ENCODE measurements at regions of chr2 and their contacts with region 1.

Region 1: DNA sequence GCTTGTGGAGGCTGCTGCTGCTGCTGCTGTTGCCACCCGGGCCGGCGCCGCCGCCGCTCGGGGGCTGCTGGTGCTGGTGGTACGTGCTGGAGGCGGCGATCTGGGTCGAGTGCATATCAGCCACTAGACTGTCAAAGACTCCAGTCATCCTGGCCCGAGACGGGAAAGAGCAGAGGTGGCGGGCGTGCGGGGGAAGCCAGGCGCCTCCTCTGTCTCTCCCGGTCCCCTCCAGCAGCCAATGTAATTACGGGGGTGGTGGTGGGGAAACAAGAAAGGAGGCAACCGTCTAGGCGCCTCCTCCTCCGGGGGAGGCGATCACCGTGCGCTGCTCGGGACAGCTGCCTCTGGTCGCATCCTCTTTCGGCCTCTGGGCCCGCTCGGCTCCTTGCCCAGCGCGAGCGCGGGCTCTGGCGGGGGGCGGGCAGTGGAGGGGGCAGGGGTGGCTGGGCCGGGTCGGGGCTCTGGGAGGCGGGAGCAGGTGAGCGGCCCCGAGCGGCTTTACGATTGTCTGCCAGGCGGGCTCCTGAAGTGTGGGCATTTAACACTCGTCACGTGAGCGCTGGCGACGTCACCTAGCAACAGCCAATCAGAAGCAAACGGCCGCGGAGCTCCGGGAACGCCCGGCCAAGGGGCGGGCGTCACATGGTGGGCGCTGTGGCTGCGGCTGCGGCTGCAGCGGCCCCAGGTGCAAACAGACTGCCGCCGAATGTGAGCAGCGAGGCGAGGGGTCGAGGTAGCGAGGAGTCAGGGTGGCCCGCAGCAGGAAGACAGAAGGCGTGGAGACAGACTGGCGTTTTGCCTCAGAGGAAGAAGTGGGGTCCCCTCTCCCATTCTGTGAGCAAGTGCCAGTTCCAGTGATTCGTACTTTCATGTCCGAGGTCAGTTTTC is at the start of gene DLX2:
- DNase-seq: peak; percentile 74
- H3K4me3 Mint-ChIP-seq: peak within 1 kb of the TSS; percentile 76
- H3K27ac Mint-ChIP-seq: peak within 1 kb of the TSS; percentile 24
- H3K4me1 Mint-ChIP-seq: peaks cover 50% of the 10 kb centered on the region
- H3K27me3 Mint-ChIP-seq: peaks cover 71% of the 10 kb centered on the region
- total RNA-seq, gene DLX2: not detected

Region 2: DNA sequence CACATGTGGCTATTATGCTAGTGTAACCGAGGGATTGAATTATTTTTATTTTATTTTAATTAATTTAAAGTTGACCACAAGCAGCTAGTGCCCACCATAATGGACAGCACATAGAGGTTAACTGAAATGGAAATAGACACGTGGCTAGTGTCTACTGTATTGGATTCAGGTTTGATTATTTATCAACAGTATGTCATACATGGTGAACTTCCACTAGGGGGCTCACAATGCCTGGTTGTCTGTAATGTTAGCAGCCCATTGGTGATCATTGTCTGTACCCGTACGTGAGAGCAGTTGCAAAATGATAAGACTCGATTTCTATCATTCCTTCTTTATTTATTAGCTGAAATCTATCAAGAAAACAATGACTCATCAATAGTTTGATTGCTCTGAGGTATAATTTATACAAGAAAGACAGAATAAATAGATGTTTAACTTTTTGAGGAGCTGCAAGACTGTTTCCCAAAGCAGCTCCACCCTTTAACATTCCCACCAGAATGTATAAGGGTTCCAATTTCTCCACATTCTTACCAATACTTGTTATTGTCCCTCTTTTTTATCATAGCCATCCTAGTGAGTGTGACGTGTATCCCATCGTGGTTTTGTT is 503.8 kb before region 1 on chr2:
- CTCF ChIA-PET with region 1: interaction called, 7 read pairs
- intact Hi-C with region 1: loop called (anchors 1 kb)
- DNase-seq: peak; percentile 72
- H3K4me3 Mint-ChIP-seq: no peak overlapping the region
- H3K27ac Mint-ChIP-seq: no peak overlapping the region
- H3K4me1 Mint-ChIP-seq: no peaks in the 10 kb centered on the region
- H3K27me3 Mint-ChIP-seq: no peaks in the 10 kb centered on the region

Region 3: DNA sequence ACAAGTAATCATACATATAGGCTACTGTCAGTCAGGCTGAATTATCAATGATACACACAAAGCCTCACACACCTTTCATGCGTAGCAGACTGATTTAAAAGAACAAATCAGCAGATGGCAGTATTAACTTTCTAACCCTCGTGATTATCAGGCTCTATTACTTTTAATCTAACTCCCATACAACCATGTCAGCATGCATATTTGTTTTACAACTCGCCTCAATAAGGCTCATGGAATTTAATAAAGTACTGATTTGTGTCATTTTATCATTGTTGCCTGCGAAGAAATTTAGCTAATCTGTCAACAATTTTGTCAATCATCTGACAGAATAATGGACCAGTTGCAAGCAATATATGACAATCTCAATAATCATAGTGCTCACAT is 291.4 kb before region 1 on chr2:
- CTCF ChIA-PET with region 1: interaction called, 12 read pairs
- intact Hi-C with region 1: loop called (anchors 1 kb)
- DNase-seq: no peak
- H3K4me3 Mint-ChIP-seq: no peak overlapping the region
- H3K27ac Mint-ChIP-seq: no peak overlapping the region
- H3K4me1 Mint-ChIP-seq: no peaks in the 10 kb centered on the region
- H3K27me3 Mint-ChIP-seq: no peaks in the 10 kb centered on the region

Region 4: DNA sequence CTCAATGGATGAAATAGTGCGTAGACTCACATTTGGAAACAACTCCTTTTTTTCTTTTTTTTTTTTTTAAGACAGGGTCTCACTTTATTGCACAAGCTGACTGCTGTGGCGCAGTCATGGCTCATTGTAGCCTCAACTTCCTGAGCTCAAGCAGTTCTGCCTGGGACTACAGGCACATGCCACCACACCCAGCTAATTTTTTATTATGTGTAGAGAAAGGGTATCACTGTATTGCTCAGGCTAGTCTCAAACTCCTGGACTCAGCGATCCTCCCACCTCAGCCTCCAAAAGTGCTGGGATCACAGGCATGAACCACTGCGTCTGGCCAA is 162.9 kb before region 1 on chr2:
- CTCF ChIA-PET with region 1: no interaction called
- intact Hi-C with region 1: loop called (anchors 5 kb)
- DNase-seq: no peak
- H3K4me3 Mint-ChIP-seq: no peak overlapping the region
- H3K27ac Mint-ChIP-seq: no peak overlapping the region
- H3K4me1 Mint-ChIP-seq: peaks cover 24% of the 10 kb centered on the region
- H3K27me3 Mint-ChIP-seq: no peaks in the 10 kb centered on the region

Region 5: DNA sequence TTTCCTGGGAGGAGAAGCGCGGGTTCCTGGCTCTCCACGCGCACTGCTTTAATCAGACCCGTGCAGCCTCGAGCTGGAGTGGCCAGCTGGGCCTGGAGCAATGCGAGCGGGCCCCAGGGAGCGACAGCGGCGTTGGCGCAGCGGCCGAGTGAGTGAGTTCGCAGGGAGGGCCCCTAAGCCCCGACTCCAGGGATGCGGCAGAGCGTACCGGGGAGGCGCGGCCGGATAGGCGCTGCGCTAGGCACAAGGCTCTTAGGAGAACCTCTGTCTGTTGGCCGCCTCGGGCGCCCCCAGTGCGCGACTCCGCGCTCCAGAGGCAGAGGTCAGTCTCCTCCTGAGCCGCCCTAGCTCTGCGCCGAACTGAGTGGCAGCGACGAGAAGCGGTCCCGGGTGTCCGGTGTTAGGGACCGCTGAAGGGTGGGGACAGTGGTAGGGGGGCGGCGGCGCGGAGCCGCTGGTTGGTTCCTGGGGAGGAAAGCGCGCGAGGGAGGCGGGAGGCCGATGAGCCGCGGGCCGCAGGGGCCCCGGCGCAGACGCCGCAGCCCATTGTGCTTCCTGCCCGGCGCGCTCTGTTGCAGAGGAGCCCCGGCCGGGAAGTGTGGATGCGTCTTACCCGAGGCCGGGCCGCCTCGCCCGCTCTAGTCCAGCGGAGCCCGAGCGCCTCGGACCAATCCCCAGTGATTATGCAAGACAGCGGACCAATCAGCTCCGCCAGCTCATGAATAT is 17.7 kb before region 1 on chr2:
- CTCF ChIA-PET with region 1: interaction called, 21 read pairs
- intact Hi-C with region 1: loop called (anchors 1 kb)
- DNase-seq: peak; percentile 77
- H3K4me3 Mint-ChIP-seq: peak overlapping the region; percentile 71
- H3K27ac Mint-ChIP-seq: no peak overlapping the region
- H3K4me1 Mint-ChIP-seq: peaks cover 63% of the 10 kb centered on the region
- H3K27me3 Mint-ChIP-seq: peaks cover 95% of the 10 kb centered on the region

Region 6: DNA sequence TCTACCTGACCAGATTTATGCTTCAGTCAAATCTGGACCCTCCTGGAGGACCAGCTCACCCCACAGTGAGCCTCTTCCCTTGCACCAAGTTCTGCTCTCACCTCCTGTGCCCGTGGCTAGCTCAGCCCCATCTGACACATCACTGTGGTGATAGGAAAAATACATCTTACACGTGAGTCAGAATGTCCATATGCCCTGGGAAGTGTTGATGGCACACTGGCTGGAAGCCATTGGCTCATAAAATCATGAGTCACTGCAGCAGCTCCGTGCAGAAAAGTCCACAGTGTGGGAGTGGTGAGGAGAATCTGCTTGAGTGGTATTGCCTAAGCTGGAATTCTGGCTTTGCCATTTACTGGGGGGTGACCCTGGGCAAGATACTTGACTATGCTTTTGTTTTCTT is 590.4 kb after region 1 on chr2:
- CTCF ChIA-PET with region 1: no interaction called
- intact Hi-C with region 1: loop called (anchors 5 kb)
- DNase-seq: peak; percentile 76
- H3K4me3 Mint-ChIP-seq: no peak overlapping the region
- H3K27ac Mint-ChIP-seq: no peak overlapping the region
- H3K4me1 Mint-ChIP-seq: peaks cover 34% of the 10 kb centered on the region
- H3K27me3 Mint-ChIP-seq: no peaks in the 10 kb centered on the region

Measured in activated naive CD4-positive, alpha-beta T cell treated with anti-CD3 and anti-CD28 coated beads for 36 hours (primary cell).